Posterior vena cava (tissue), 2 donors: ENCODE measurements at regions of chr6 and their contacts with region 1.

Region 1: GRCh38 chr6:11496152-11497060 is 41.1 kb upstream of the TMEM170B start:
- DNase-seq: no peak

Region 2: GRCh38 chr6:11144393-11144851 is 352.0 kb before region 1 on chr6:
- intact Hi-C with region 1: loop called (anchors 2 to 5 kb)
- DNase-seq: peak; percentile 90

Region 3: DNA sequence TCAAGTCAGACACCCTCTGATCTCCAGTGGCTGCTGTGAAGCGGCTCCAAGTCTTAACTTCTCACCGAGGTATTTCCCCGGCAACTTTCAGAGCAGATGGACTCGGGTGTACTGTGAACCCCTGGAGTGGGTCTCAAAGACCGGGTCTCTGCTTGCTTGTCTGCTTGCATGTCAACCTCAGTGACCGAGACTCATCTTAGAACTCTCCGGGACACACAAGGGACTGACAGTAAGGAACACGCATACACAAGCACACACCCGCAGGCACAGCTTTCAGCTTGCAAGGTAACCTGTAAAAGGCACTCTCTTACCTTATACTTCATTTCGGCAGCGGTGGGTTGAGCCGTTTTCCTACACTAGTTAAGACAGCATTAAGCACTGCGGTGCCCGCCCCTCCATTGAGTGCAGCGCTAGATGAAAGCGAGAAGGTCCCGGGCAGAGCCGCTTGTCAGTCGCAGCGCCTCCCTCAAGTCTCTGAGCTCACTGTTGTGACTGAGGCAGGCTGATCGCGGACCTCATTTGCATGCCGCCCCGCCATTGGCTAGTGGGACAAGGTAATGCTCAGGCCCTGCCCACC is 264.1 kb before region 1 on chr6 and contains the start of gene NEDD9:
- intact Hi-C with region 1: loop called in 1 of 2 experiments (anchors 10 kb)
- DNase-seq: peak; percentile 99
- total RNA-seq, gene NEDD9: 105 to 166 TPM

Region 4: GRCh38 chr6:11353921-11354389 is 142.5 kb before region 1 on chr6:
- intact Hi-C with region 1: loop called in 1 of 2 experiments (anchors 10 kb)
- DNase-seq: no peak

Region 5: DNA sequence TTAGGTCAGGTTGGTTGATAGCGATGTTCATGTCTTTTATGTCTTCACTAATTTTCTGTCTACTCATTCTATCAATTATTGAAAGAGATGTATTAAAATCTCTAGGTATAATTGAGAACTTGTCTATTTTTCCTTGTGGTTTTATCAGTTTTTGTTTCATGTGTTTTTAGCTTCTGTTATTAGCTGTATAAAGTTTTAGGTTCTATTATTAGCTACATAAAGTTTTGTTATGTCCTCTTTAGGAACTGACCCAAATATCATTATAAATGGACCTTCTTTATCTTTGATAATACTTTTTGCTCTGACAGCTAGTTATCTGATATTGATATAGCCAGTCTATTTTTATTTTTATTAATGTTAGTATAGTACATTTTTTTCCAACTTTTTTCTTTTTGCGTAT is 51.3 kb before region 1 on chr6:
- intact Hi-C with region 1: no loop called
- DNase-seq: no peak